ENCODE measurements at regions of chr2 and their contacts with region 1.

Region 1: GRCh38 chr2:207746131-207746530 is 23.6 kb downstream of the FZD5 start:
- DNase-seq: no peak
- H3K4me3 ChIP-seq: no peak overlapping the region
- H3K27ac ChIP-seq: no peak overlapping the region
- H3K4me1 ChIP-seq: no peaks in the 10 kb centered on the region
- H3K27me3 ChIP-seq: no peaks in the 10 kb centered on the region
- CTCF ChIP-seq: peak; percentile 90

Region 2: DNA sequence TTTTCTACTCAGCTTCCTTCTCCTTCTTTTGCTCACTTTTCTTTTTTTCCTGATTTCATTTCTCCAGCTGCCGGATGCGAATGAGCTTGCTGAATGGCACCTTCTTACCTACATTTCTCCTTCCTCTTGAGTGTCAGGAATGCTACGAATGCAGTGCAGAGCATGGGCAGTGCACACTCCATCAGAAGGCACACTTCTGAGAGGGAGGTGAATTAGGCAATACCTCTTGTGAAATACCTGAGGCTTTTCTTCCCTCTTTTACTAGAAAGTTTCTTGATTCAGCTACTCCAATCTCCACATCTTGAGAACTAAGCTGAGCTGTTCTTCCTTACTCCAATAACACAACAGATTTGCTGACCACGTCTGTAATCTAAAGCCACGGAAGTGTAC is 228.1 kb after region 1 on chr2:
- intact Hi-C with region 1: loop called (anchors 5 kb)
- DNase-seq: no peak
- H3K4me3 ChIP-seq: no peak overlapping the region
- H3K27ac ChIP-seq: no peak overlapping the region
- H3K4me1 ChIP-seq: peaks cover 21% of the 10 kb centered on the region
- H3K27me3 ChIP-seq: no peaks in the 10 kb centered on the region
- CTCF ChIP-seq: no peak

Region 3: DNA sequence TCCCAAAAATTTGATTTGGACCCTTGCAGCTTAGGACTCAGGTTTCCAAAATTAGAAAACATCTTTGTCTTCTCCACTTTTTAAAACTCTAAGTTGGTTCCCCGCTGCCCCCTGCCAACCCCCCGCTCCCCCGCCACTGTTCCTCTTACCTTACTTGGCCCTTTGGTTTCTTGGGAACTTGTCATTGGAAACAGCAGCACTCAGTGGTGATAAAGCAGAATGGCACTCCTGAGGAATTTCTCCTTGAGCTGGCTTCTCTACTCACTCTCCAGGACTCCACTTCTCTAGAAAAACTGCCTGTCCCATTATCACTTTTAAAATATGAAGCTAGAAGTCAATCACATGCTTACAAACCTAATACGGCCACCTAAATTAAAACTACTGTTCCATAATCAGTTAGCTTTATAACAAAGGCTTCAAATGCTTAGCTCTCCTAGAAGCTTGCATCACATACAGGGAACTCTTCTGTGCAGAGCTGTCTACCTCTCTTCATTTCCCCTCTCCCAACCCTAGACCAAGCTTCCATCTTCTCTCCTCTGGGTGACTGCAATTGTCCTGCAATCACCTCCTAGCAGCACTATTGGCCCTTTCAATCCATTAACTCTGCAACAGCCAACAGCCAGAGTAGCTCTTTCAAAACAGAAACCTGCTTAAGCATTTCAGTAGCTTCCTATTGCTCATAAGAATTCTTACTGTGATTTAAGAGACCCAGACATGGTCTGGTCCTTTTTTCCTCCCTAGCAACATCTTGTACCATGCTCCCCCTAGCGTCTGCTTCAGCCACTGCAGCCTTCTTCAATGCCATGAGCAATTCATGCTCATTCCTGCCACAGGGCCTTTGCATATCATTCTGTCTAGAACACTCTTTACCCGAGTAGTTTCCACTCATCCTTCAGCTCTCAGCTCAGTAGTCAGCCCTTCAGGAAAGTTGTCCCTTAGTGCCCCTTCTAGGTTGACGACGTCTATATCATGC is 294.4 kb after region 1 on chr2:
- intact Hi-C with region 1: loop called (anchors 5 kb)
- DNase-seq: peak; percentile 61
- H3K4me3 ChIP-seq: no peak overlapping the region
- H3K27ac ChIP-seq: no peak overlapping the region
- H3K4me1 ChIP-seq: no peaks in the 10 kb centered on the region
- H3K27me3 ChIP-seq: no peaks in the 10 kb centered on the region
- CTCF ChIP-seq: peak; percentile 71